ENCODE measurements at regions of chr1 and their contacts with region 1.

Region 1: DNA sequence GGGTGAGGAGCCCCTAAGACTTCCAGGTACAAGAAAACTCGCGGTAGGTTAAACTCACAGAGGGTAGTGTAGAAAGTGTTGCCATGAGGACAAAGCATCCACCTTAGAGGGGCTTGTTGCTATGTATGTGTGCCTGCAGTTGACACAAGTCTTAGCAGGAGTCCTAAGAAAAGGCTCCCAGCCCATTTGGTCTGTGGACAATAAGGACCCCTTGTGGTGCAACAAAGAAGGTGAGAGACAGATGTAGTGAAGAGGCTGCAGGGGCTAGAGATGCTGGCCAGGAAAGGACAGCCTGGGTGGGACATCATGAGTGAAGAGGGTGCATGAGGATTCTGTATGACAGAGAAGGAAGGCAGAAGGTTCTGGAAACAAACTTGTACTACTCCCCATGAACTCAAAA is 36.3 kb upstream of the IL10 start:
- DNase-seq: peak; percentile 63 to 84 (median 81)
- H3K4me3 ChIP-seq: no peak overlapping the region
- H3K27ac ChIP-seq: no peak overlapping the region
- H3K4me1 ChIP-seq: no peaks in the 10 kb centered on the region
- H3K27me3 ChIP-seq: no peaks in the 10 kb centered on the region

Region 2: GRCh38 chr1:206734499-206735142 is 74.0 kb before region 1 on chr1:
- CTCF ChIA-PET with region 1: interaction called, 250 read pairs
- POLR2A ChIA-PET with region 1: no interaction called
- DNase-seq: peak; percentile 36 to 69 (median 65)
- H3K4me3 ChIP-seq: no peak overlapping the region
- H3K27ac ChIP-seq: no peak overlapping the region
- H3K4me1 ChIP-seq: peaks cover 0 to 38% (median 36%) of the 10 kb centered on the region in 4 experiments
- H3K27me3 ChIP-seq: no peaks in the 10 kb centered on the region

Region 3: DNA sequence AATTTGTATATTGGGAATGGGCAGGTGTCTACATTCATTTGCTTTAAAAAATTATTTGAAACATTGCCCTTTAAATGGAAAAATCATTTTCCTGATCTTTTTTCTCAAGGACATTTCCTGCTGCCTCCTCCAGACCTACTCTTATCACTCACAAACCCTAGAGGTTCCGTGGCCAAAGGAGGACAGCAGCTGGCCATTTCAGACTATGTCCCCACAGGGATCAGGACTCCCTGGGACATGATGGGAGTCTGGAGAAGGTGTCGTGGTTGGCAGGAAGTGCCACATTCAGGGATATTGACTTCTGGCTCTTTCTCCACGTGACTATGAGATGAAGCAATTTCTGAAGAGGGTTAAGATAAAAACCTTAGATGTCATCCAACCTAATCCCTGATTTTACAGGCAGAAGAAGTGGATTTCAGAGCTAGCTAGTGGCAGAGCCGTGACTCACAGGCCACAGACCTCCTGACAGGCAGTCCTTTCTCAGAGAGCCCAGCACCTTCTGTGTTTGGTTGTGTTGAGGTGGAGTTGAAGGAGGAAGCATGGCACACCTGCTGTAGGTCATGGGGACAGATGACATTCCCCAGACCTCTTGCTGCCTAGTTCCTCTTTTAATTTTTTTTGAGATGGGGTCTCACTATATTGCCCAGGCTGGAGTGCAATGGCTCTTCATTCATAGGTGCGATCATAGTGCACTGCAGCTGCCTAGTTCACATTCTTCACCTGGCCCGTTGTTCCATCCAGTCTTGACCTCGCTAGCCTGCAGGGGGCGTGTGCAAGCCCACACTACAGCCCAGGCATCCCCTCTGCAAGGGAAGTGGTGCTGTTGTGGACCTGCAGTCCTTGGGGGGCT is 10.9 kb before region 1 on chr1:
- CTCF ChIA-PET with region 1: interaction called, 20 read pairs
- POLR2A ChIA-PET with region 1: no interaction called
- DNase-seq: peak; percentile 42 to 72 (median 60)
- H3K4me3 ChIP-seq: no peak overlapping the region
- H3K27ac ChIP-seq: no peak overlapping the region
- H3K4me1 ChIP-seq: peaks cover 0 to 13% (median under 1%) of the 10 kb centered on the region in 4 experiments
- H3K27me3 ChIP-seq: no peaks in the 10 kb centered on the region

Region 4: GRCh38 chr1:206834711-206835110 is 26.1 kb after region 1 on chr1:
- CTCF ChIA-PET with region 1: interaction called, 19 read pairs
- POLR2A ChIA-PET with region 1: no interaction called
- DNase-seq: no peak
- H3K4me3 ChIP-seq: no peak overlapping the region
- H3K27ac ChIP-seq: no peak overlapping the region
- H3K4me1 ChIP-seq: peaks cover 15 to 53% (median 38%) of the 10 kb centered on the region in 4 experiments
- H3K27me3 ChIP-seq: no peaks in the 10 kb centered on the region

Region 5: DNA sequence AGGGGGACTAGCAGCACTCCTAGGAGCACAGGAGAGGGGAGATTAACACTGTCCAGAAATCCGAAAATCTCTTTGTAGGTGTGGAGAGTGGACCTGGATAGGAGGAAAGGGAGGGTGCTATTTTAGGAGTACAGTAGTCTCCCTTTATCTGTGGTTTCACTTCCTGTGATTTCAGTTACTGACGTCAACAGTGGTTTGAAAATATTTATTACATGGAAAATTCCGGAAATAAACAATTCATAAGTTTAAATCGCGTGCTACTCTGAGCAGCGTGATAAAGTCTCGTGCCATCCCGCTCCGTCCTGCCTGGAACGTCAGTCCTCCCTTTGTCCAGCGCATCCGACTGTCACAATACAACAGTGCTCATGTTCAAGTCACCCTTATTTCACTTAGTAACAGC is 82.1 kb after region 1 on chr1:
- CTCF ChIA-PET with region 1: no interaction called
- POLR2A ChIA-PET with region 1: no interaction called
- DNase-seq: peak; percentile 38 to 69 (median 46)
- H3K4me3 ChIP-seq: peak overlapping the region in 1 of 7 experiments; percentile 4
- H3K27ac ChIP-seq: no peak overlapping the region
- H3K4me1 ChIP-seq: peaks cover 0 to 9% (median 2%) of the 10 kb centered on the region in 4 experiments
- H3K27me3 ChIP-seq: no peaks in the 10 kb centered on the region

Region 6: GRCh38 chr1:206935491-206936067 is 127.0 kb after region 1 on chr1:
- CTCF ChIA-PET with region 1: interaction called, 13 read pairs
- POLR2A ChIA-PET with region 1: no interaction called
- DNase-seq: peak; percentile 72 to 87 (median 85)
- H3K4me3 ChIP-seq: no peak overlapping the region
- H3K27ac ChIP-seq: no peak overlapping the region
- H3K4me1 ChIP-seq: peaks cover under 1 to 2% (median 2%) of the 10 kb centered on the region in 4 experiments
- H3K27me3 ChIP-seq: no peaks in the 10 kb centered on the region

Measured in common myeloid progenitor, CD34-positive (primary cell).